PC-9 (cell line): ENCODE measurements at regions of chr10 and their contacts with region 1.

Region 1: DNA sequence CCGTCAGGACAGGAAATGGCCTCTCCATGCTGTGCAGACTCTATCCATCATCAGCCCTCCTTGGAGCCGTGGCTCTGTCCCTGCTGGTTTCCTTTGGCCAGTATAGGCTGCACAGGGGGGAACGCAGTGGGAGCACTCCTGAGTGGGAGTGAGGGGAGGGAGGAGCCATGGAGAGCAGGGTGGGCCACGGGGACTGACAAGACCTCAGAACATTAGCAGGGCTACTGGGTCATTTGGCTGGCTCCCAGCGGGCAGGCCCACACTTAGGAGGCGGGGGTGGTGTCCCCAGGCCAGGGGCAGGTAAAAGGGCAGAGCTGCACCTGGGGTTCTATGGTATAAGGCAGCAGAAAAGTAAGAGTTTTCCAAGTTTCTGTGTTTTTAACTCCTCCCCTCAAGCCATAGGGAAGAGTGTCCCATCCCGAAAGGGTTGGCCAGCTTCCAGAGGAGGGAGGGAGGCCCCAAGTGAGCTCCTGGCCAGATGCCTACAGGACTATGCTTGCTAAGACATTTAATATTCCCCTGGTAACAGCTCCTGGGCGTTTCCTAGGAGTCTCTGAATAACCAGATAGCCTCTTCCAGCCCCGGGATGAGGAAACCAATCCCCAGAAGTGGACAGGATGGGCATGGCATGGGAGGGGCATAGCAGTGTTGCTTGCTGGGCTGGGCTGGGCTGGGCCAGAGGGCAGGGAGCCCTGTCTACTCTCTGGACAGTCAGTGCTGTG is 5.5 kb upstream of the OPN4 start:
- DNase-seq: peak; percentile 75 to 87
- H3K4me3 ChIP-seq: no peak overlapping the region
- H3K27ac ChIP-seq: peak overlapping the region; percentile 61
- H3K4me1 ChIP-seq: peaks cover 61% of the 10 kb centered on the region
- H3K27me3 ChIP-seq: no peaks in the 10 kb centered on the region
- CTCF ChIP-seq: no peak

Region 2: GRCh38 chr10:86521678-86522509 is 127.0 kb before region 1 on chr10 and contains the start of gene WAPL:
- CTCF ChIA-PET with region 1: no interaction called
- POLR2A ChIA-PET with region 1: no interaction called
- intact Hi-C with region 1: loop called (anchors 2 kb)
- DNase-seq: peak; percentile 74 to 92
- H3K4me3 ChIP-seq: peak within 1 kb of the TSS; percentile 79
- H3K27ac ChIP-seq: peak within 1 kb of the TSS; percentile 56
- H3K4me1 ChIP-seq: peaks cover 28% of the 10 kb centered on the region
- H3K27me3 ChIP-seq: no peaks in the 10 kb centered on the region
- CTCF ChIP-seq: no peak
- total RNA-seq, gene WAPL: 17.9 and 20.9 TPM in 2 replicates

Region 3: GRCh38 chr10:86661161-86662025 is 12.5 kb after region 1 on chr10:
- CTCF ChIA-PET with region 1: no interaction called
- POLR2A ChIA-PET with region 1: no interaction called
- intact Hi-C with region 1: no loop called
- DNase-seq: no peak
- H3K4me3 ChIP-seq: no peak overlapping the region
- H3K27ac ChIP-seq: no peak overlapping the region
- H3K4me1 ChIP-seq: peaks cover 14% of the 10 kb centered on the region
- H3K27me3 ChIP-seq: no peaks in the 10 kb centered on the region
- CTCF ChIP-seq: no peak